ENCODE measurements at regions of chr9 and their contacts with region 1.

Region 1: GRCh38 chr9:69919461-69920061 is 98.9 kb downstream of the CFAP95 start:
- DNase-seq: no peak
- H3K4me3 ChIP-seq: no peak overlapping the region
- H3K27me3 ChIP-seq: no peaks in the 10 kb centered on the region
- CTCF ChIP-seq: peak; percentile 68

Region 2: DNA sequence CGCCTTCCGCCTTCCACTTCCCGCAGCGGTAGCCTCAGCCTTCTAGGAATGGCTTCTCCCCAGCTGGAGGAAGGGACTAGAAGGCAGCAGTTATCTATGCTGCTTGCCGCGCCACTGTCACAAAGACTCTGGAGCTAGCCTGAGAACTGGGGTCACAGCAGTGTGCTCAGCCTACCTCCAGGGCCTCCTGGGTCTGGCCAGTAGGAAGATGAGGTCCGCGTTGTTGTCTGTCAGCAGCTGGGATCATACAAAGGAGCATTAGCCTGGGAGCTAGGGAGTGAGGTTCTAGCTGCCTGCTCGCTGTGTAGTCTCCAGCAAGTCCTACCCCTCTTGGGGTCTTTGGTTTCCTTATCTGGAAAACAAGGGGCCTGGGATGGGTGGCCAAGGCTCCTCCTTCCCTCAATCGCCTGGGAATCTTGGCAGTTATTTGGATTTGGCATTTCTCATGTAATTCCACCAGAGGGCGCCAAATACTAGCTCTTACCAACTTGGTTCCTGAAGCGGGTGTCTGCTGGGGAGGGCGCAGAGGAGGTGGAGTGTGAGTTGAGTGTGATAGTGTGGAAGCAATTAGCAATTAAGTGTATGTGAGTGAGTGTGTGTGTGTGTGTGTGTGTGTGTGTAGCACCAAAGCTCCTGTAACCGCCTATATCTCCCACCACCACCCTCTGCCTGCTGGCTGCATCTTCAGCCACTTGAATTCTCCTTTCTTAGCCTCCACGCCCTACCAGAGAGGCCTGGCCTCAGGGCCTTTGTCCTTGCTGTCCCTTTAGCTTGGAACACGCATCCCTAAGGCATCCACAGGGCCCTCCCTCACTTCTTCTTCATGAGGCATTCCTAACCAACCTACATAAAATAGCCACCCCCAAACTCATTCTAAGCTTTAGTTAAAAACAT is 497.4 kb before region 1 on chr9:
- CTCF ChIA-PET with region 1: interaction called, 39 read pairs
- POLR2A ChIA-PET with region 1: no interaction called
- DNase-seq: peak; percentile 5
- H3K4me3 ChIP-seq: no peak overlapping the region
- H3K27me3 ChIP-seq: no peaks in the 10 kb centered on the region
- CTCF ChIP-seq: peak; percentile 65

Region 3: DNA sequence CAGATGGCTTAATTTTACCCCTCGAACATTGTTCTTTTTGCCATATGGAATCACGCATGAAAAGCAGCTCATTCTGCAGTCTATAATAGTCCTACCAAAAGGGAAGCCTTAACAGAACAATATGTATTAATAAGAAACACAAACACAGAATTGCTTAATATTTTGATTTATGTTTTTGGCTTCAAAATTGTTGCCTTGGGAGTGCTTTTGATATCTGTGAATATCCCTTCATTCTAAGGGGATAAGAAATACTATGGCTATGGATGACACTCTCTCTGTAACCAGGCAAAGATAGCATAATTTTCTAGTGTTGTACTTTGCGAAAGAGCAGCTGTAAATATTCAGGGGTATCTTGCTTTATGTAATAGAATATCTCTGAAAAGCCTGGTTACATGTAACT is 125.2 kb before region 1 on chr9:
- CTCF ChIA-PET with region 1: no interaction called
- POLR2A ChIA-PET with region 1: no interaction called
- DNase-seq: no peak
- H3K4me3 ChIP-seq: no peak overlapping the region
- H3K27me3 ChIP-seq: peaks cover 2% of the 10 kb centered on the region; the same call in 1 of the 2 replicates
- CTCF ChIP-seq: no peak

Region 4: DNA sequence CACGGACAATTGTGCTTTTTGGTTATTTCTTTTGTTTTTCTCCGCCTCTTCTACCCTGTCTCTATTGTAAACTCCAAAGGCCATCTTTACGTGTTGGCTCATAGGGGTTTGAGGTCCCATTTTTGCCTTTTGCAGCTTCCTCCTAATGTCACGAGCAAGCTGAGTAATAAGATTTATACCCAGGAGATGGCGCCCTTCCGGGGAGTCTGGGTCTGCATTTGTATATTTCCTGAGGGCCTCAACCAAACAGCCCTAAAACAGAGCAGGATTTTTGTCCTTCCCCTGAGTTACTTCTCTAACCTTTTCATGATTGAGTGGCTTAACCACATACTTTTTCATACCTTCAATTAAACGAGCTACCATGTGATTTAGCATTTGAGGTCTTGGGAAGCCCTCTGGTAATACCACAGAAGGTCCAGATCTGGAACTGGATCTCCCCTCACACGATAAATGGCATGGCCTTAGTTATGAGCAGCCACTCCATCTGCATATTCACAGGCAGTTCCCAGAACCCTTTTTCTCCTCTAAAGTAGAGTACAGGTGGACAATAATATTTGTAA is 110.2 kb before region 1 on chr9:
- CTCF ChIA-PET with region 1: interaction called, 12 read pairs
- POLR2A ChIA-PET with region 1: no interaction called
- DNase-seq: no peak
- H3K4me3 ChIP-seq: no peak overlapping the region
- H3K27me3 ChIP-seq: no peaks in the 10 kb centered on the region
- CTCF ChIP-seq: peak; percentile 47; the same call in 1 of the 2 replicates

Region 5: DNA sequence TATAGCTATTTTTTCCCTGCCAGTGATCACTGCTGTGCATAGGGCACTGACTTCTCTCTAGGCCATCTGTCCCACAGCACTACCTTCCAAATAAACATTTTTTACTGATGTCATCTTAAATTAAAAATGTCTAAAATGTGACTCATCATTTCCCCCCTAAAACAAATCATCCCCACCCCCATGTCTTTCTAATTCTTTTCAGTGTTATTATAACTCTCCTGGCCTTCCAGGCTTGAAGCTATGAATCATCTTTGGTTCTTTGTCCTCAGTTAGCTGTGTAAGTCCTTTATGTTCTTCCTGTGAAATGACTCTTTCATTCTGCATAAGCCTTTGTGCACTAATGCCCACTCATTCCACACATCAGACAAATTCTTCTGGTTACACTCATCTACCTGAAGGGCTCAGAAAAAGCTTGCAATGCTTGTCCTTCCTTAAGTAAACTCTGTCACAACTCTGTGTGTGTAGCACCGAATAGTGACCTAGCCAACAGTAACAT is 20.8 kb before region 1 on chr9:
- CTCF ChIA-PET with region 1: interaction called, 10 read pairs
- POLR2A ChIA-PET with region 1: no interaction called
- DNase-seq: peak; percentile 61
- H3K4me3 ChIP-seq: no peak overlapping the region
- H3K27me3 ChIP-seq: no peaks in the 10 kb centered on the region
- CTCF ChIP-seq: no peak

Region 6: GRCh38 chr9:69931340-69931739 is 11.8 kb after region 1 on chr9:
- CTCF ChIA-PET with region 1: interaction called, 16 read pairs
- POLR2A ChIA-PET with region 1: no interaction called
- DNase-seq: no peak
- H3K4me3 ChIP-seq: no peak overlapping the region
- H3K27me3 ChIP-seq: no peaks in the 10 kb centered on the region
- CTCF ChIP-seq: peak; percentile 49

Region 7: DNA sequence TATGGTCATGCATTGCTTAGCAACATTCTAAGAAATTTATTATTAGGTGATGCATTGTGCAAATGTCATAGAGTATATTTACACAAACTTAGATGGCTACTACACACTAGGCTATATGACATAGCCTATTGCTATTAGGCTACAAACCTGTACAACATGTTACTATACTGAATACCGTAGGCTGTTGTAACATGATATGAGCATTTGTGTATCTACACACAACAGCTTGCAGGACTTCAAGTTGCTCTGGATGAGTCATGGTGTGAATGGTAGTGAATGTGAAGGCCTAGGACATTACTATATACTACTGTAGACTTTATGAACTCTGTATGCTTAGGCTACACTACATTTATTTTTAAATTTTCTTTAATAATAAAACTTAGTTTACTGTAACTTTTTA is 16.9 kb after region 1 on chr9:
- CTCF ChIA-PET with region 1: interaction called, 16 read pairs
- POLR2A ChIA-PET with region 1: no interaction called
- DNase-seq: no peak
- H3K4me3 ChIP-seq: no peak overlapping the region
- H3K27me3 ChIP-seq: no peaks in the 10 kb centered on the region
- CTCF ChIP-seq: no peak